ENCODE measurements at regions of chr3 and their contacts with region 1.

Region 1: DNA sequence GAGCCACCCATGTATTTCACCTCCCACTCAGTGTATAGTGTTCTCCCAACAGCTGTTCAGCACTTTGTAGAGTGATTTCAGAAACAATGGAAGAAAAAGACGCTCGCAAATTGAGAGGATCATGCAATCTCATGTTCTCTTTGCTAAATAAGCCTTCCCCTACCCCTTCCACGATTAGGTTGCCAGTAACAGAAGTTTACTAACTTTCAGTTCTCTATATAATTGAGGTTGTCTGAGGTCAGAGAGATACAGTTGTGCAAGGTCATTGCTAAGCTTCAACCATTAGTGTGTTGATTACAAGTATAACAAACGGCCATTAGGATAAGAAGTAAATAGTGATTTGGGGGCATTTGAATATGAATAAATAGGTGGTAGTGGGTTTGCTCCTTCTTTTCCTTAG is 99.6 kb downstream of the TUSC7 start:
- DNase-seq: no peak

Region 2: DNA sequence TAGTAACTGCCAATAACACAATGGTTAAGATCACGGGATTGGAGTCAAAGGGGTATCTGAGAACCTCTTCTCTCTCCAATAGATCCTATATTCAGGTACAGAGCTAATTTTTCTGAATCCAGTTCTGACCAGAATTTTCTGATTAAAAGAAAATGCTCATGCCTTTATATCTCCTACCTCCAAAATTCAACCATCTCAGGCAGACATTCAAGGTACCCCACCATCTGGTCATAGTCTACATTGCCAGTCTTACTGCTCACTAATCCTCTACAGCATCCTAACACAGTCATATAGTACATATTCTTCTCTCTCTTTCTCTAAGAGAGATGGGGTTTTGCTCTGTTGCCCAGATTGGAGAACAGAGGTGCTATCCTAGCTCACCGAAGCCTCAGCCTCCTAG is 423.0 kb before region 1 on chr3:
- intact Hi-C with region 1: no loop called
- DNase-seq: no peak

Region 3: GRCh38 chr3:116770815-116771450 is 38.3 kb before region 1 on chr3:
- intact Hi-C with region 1: no loop called
- DNase-seq: no peak

Region 4: GRCh38 chr3:117814975-117815374 is 1005.8 kb after region 1 on chr3:
- intact Hi-C with region 1: loop called in 1 of 2 experiments (anchors 5 kb)
- DNase-seq: no peak